SK-N-SH (cell line): ENCODE measurements at regions of chr10 and their contacts with region 1.

Region 1: DNA sequence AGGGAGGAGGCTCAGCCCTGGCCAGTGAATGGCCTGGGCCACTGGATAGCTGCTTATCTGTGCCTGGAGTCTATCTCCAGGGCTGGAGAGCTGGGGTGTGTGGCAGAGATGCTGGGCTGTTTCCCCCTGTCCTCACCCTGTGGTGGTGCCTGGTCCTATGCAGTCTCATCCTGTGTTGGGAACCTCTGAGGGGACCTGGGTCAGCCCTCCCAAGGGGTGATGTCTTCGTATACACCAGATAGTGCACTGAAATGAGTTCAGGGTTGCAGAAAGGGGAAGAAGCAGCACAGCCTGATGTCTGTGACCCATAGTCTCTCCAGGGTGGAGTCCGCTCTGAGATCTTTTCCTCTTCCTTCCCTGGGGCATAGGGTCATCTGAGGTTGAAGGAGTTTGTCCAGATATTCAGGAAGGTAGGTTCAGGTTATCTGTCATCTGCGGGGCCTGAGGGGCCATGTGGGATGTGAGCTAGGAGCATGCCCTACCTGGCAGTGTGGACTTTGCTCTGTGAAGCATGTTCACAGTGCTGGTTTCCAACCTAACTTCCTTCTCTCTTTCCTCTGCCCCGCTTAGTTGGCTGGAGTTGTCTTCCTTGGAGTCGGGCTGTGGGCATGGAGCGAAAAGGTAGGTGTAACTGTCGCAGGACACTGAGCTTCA is 33.4 kb upstream of the SH2D4B start:
- DNase-seq: peak; percentile 75
- H3K4me3 ChIP-seq: no peak overlapping the region
- H3K27ac ChIP-seq: peak overlapping the region in 1 of 2 experiments; percentile 92; a peak in 2 of 4 replicates
- H3K4me1 ChIP-seq: peaks cover 21 to 69% of the 10 kb centered on the region in 2 experiments; a peak in 3 of 4 replicates
- H3K27me3 ChIP-seq: no peaks in the 10 kb centered on the region
- CTCF ChIP-seq: no peak
- EP300 ChIP-seq: no peak
- RAD21 ChIP-seq: peak; percentile 15; the same call in 1 of the 2 replicates

Region 2: GRCh38 chr10:80372675-80373074 is 131.6 kb before region 1 on chr10:
- CTCF ChIA-PET with region 1: interaction called, 12 read pairs
- POLR2A ChIA-PET with region 1: no interaction called
- DNase-seq: no peak
- H3K4me3 ChIP-seq: no peak overlapping the region
- H3K27ac ChIP-seq: no peak overlapping the region
- H3K4me1 ChIP-seq: no peaks in the 10 kb centered on the region
- H3K27me3 ChIP-seq: no peaks in the 10 kb centered on the region; the same call in 1 of the 2 replicates
- CTCF ChIP-seq: no peak
- EP300 ChIP-seq: no peak
- RAD21 ChIP-seq: no peak

Region 3: DNA sequence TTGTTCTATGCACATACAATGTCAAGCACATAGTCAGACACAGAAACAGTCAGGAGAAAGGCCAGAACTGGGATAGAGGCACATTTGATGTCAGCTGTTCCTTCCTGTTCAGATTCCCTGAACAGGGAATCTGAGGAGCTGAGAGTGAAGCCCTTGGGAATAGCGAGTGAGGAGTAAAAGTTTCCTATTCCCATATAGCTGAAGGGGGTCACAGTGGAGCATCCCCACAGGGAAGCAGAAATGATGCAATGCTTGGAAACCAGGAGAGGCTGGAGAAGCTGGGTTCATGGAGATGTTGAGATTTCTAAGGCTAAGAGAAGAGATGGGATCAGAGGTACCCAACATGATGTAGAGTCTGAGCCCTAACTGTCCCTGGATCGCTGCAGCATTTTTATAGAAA is 107.3 kb before region 1 on chr10:
- CTCF ChIA-PET with region 1: interaction called, 23 read pairs
- POLR2A ChIA-PET with region 1: no interaction called
- DNase-seq: no peak
- H3K4me3 ChIP-seq: no peak overlapping the region
- H3K27ac ChIP-seq: no peak overlapping the region
- H3K4me1 ChIP-seq: peaks cover 0 to 8% of the 10 kb centered on the region in 2 experiments; a peak in 1 of 4 replicates
- H3K27me3 ChIP-seq: no peaks in the 10 kb centered on the region; the same call in 1 of the 2 replicates
- CTCF ChIP-seq: no peak
- EP300 ChIP-seq: no peak
- RAD21 ChIP-seq: no peak

Region 4: DNA sequence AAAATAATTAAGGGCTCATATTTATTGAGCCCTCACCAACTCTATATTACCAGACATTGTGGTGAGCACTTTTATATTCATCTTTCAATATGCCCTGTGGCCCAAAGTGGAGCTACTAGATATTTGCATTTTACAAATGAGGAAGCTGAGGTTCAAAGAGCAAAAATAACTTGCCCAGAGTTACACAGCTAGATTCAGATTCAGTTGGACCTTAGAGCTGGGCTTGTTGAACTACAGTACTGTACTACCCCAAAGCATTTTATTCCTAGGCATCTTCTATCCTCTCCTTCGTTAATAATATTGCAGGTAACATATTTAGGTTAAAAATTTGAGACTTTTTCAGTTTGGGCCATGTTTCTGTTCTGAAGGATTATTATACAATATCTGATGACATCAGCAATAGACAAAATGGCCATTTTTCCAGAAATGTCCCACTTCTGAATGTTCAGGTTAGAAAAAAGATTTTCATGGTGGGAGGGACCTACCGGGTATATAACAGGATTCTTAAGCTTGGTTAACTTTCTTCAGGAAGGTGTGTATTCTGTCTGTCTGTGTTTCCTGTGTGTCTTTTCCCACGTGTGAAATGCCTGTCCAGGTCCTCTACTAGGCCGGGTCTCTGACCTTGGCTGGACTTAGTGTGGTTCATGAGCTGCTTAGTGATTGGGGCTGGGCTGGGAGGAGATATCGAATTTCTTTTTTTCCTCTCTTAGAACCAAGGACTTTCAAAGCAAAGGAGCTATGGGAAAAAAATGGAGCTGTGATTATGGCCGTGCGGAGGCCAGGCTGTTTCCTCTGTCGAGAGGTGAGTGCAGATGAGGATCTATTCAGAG is 82.4 kb before region 1 on chr10:
- CTCF ChIA-PET with region 1: interaction called, 21 read pairs
- POLR2A ChIA-PET with region 1: no interaction called
- DNase-seq: no peak
- H3K4me3 ChIP-seq: no peak overlapping the region
- H3K27ac ChIP-seq: no peak overlapping the region
- H3K4me1 ChIP-seq: peaks cover 0 to 15% of the 10 kb centered on the region in 2 experiments; a peak in 1 of 4 replicates
- H3K27me3 ChIP-seq: no peaks in the 10 kb centered on the region
- CTCF ChIP-seq: no peak
- EP300 ChIP-seq: no peak
- RAD21 ChIP-seq: no peak

Region 5: DNA sequence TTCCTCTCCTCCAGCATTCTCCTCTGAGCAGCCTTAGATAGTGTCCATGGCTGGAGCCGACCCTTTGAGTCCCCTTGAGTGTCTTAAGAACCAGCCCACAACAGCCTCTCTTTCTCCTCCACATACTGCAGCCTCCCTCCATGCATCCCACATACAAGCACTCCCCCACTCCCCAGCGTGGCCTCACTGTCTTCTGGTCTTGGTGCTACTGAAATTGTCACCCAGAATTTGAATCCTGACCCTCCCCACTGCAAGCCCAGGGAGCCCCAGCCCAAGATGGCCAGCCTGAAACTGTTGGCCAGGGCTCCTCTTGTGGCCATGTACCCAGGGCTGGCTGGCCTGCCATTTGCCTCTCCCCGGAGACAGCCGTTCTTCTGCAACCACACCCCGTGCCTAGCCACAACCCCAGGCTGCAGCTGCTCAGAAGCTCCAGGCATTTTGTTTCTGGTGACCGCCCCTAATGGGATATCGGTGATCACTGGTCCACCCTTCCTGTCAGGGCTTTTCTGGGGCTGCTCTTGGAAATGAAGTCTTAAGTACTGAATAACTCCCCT is 14.6 kb after region 1 on chr10:
- CTCF ChIA-PET with region 1: interaction called, 36 read pairs
- POLR2A ChIA-PET with region 1: no interaction called
- DNase-seq: no peak
- H3K4me3 ChIP-seq: no peak overlapping the region
- H3K27ac ChIP-seq: no peak overlapping the region
- H3K4me1 ChIP-seq: no peaks in the 10 kb centered on the region
- H3K27me3 ChIP-seq: no peaks in the 10 kb centered on the region
- CTCF ChIP-seq: no peak
- EP300 ChIP-seq: no peak
- RAD21 ChIP-seq: no peak